Adrenal gland (tissue), 19 donors: ENCODE measurements at regions of chr12 and their contacts with region 1.

Region 1: DNA sequence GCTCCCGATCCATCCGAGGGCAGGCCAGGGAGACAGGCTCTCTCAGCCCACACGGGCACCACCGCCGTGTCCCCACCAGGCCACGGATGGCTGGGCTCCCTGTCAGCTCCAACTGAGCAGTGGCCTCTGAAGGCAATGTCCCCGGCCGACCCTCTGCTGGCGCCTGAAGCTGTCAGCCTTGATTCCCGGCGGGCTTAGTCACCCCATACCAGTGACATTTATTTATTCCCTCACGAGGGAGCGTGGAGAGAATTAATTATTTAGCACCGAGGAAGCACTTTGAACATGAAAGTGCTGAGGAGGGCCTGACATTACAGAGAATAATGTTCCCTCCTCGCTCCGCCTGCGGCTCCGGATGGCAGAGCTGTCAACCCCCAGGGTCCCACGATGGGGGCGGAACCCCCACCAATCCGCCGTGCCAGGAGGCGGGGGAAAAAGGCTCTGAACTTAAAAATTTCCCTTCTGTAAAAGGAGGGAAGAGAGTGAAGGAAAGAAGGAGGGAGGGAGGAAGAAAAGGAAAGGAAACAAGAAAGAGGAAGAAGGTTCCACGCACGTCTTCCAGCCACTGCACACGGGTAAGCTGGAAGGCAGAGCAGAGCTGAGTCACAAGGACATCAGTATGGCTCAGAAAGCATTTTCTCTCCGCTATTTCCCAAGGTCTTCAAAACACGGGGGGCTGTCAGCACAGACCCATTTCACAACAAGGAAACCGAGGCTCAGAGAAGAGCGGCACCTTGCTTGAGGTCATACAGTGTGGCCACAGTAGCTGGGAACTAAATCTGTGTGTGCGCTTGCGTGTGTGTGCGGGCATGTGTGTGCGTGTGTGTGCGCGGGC is 108.7 kb upstream of the NCOR2 start:
- DNase-seq: peak; percentile 64 to 88 (median 81)
- H3K4me3 ChIP-seq: peak overlapping the region in 1 of 4 donors; percentile 23
- H3K27ac ChIP-seq: peak overlapping the region in 4 of 5 donors; percentile 34 to 91 (median 76)
- H3K4me1 ChIP-seq: peaks cover 34 to 47% of the 10 kb centered on the region in 2 donors
- H3K27me3 ChIP-seq: no peaks in the 10 kb centered on the region
- CTCF ChIP-seq: peak in 3 of 6 experiments; percentile 6 to 34 (median 31)
- POLR2A ChIP-seq: peak in 1 of 2 donors; percentile 29

Region 2: DNA sequence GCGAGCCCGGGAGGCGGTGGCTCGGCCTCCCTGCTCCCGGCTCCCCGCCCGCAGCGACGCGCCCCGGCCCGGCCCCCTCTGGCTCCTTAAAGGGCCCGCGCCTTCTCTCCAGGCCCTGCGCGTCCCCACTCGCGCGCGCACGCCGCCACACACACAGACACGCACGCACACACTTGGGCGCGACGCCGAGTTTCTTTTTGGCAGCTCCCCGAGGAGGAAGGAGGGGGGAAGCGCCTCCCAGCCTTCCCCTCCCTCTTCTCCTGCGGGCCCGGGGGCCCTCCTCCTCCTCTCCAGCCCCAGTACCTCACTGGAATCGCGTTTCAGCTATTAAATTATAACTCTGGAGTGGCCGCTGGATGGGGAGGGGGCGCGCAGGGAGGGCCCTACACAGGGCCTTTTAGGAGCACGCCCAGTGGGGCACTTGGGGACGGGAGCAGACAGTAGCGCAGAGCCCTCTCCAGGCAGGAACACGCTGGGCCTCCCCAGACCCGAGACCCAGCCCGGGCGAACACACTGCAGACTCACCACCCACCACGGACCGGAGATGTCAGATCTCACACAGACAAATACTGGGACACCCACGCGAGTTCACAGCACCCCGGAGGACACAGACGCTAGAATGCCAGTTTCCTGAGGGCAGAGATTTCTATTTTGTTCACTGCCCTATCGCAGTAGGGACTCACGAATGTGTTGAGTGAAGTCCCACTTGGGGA is 108.3 kb before region 1 on chr12:
- intact Hi-C with region 1: loop called (anchors 5 to 10 kb)
- DNase-seq: peak; percentile 93 to 97 (median 96)
- H3K4me3 ChIP-seq: peak overlapping the region in 2 of 4 donors; percentile 6 to 47
- H3K27ac ChIP-seq: peak overlapping the region; percentile 72 to 99 (median 88)
- H3K4me1 ChIP-seq: peaks cover 40 to 48% of the 10 kb centered on the region in 2 donors
- H3K27me3 ChIP-seq: no peaks in the 10 kb centered on the region
- CTCF ChIP-seq: peak in 1 of 6 experiments; percentile 7
- POLR2A ChIP-seq: peak in 1 of 2 donors; percentile 18